ENCODE measurements at regions of chr19 and their contacts with region 1.

Region 1: GRCh38 chr19:16548956-16549355 is 6.7 kb upstream of the CHERP start:
- DNase-seq: no peak
- CTCF ChIP-seq: no peak

Region 2: GRCh38 chr19:16594131-16594586 is 45.2 kb after region 1 on chr19:
- CTCF ChIA-PET with region 1: no interaction called
- POLR2A ChIA-PET with region 1: no interaction called
- DNase-seq: no peak
- CTCF ChIP-seq: no peak

Region 3: GRCh38 chr19:17025991-17026658 is 477.2 kb after region 1 on chr19:
- CTCF ChIA-PET with region 1: no interaction called
- POLR2A ChIA-PET with region 1: interaction called, 10 read pairs
- DNase-seq: no peak
- CTCF ChIP-seq: no peak